ENCODE measurements at regions of chr2 and their contacts with region 1.

Region 1: DNA sequence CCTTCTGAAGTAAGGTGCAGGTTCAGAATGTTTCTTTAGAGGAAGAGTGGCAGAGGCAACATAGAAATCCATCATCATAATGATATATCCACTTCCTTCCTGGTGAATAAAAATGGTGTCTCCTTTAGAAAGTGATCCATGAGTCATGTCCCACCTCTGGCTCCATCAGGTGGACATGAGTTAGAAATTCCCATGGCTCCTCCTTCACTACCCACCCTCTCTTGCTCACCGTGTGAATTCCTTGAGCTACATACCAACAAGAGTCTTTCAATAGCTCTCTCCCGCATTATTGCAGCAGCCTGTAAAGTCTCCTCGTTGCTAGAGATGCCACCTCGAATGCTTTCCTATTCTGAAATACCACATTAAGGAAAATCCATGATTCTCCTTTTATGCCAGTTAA is 317.6 kb downstream of the LNPK start:
- DNase-seq: no peak
- ATAC-seq: no peak
- H3K4me3 ChIP-seq: no peak overlapping the region
- H3K27ac ChIP-seq: no peak overlapping the region
- H3K4me1 ChIP-seq: no peaks in the 10 kb centered on the region
- H3K27me3 ChIP-seq: peaks cover 0 to 7% of the 10 kb centered on the region in 2 donors
- CTCF ChIP-seq: no peak
- POLR2A ChIP-seq: no peak

Region 2: DNA sequence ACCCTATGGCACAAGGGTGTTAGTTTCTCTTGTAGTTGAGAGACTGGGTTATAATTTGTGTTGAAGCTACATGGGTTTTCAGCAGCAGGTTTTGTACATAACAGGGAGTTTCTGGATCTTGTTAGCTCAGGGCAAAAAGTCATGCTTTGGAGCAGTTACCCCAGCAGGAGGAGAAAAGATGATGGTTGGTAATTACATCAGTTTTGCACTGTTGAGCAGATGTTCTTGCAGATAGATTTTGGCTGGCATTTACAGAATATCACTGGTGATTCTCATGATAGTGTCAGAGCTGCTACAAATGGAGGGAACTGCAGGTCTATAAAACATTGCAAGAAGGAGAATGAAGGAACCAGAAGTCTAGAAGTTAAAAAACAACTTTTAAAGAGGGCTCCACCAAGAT is 287.8 kb before region 1 on chr2:
- intact Hi-C with region 1: no loop called
- DNase-seq: no peak
- ATAC-seq: no peak
- H3K4me3 ChIP-seq: no peak overlapping the region
- H3K27ac ChIP-seq: no peak overlapping the region
- H3K4me1 ChIP-seq: no peaks in the 10 kb centered on the region
- H3K27me3 ChIP-seq: no peaks in the 10 kb centered on the region
- CTCF ChIP-seq: no peak
- POLR2A ChIP-seq: no peak

Region 3: DNA sequence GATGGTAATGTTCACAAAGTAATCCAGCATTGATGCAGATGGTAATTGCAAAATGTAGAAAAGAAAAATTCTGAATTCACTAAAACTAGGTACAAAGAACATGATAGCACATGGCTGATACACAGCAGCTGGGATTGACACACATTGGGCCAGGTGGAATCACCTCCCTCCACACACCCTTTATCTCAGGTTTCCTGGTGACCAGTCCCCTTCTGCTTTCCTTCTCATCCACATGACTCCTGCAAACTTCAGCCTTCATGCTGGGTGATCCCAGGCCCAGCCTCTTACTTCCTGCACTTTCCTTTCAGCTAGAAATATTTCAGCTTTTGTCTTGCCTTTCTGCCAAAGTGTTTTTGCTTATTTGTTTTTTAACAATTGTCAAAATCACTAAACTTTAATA is 70.7 kb after region 1 on chr2:
- intact Hi-C with region 1: no loop called
- DNase-seq: no peak
- ATAC-seq: no peak
- H3K4me3 ChIP-seq: no peak overlapping the region
- H3K27ac ChIP-seq: no peak overlapping the region
- H3K4me1 ChIP-seq: no peaks in the 10 kb centered on the region
- H3K27me3 ChIP-seq: no peaks in the 10 kb centered on the region
- CTCF ChIP-seq: no peak
- POLR2A ChIP-seq: no peak

Region 4: GRCh38 chr2:175926272-175926671 is 241.8 kb after region 1 on chr2:
- intact Hi-C with region 1: no loop called
- DNase-seq: no peak
- ATAC-seq: no peak
- H3K4me3 ChIP-seq: no peak overlapping the region
- H3K27ac ChIP-seq: no peak overlapping the region
- H3K4me1 ChIP-seq: no peaks in the 10 kb centered on the region
- H3K27me3 ChIP-seq: no peaks in the 10 kb centered on the region
- CTCF ChIP-seq: no peak
- POLR2A ChIP-seq: no peak

Region 5: DNA sequence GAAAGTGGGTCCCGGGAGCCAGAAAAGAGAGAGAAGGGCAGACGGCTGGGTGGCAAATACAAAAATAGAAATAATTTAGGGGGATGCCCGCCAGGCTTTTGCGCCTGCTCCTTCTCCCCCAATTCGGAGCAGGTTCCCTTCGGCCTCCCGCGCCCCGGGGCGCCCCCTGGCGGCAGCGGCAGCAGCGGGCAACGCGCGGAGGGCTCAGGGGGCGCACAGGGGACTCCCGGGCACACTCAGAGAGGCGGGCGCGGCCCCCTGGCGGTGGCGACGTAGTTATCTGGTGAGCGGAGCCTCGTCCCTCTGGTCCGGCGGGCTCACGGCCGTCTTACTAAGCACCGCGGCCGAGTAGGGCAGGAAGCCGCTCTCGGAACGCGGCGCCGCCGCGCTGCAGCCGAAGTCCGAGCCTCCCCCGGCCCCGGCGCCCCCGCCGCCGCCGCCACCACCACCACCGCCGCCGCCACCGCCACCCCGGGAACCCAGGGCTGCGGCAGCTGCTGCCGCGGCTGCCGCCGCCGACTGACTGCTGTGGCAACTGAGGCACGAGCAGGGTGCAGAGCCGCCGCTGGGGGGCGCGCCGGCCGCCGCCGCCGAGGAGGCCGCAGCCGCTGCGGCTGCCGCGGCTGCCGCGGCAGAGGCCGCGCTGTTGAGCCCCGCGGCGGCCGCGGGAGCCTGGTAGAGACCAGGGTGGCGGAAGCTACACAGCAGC is 395.5 kb after region 1 on chr2:
- intact Hi-C with region 1: loop called (anchors 10 kb)
- DNase-seq: peak in 1 of 3 donors; percentile 34
- ATAC-seq: peak; percentile 36 to 57 (median 50)
- H3K4me3 ChIP-seq: no peak overlapping the region
- H3K27ac ChIP-seq: no peak overlapping the region
- H3K4me1 ChIP-seq: peaks cover 0 to 6% (median 0%) of the 10 kb centered on the region in 4 donors
- H3K27me3 ChIP-seq: peaks cover 33 to 86% of the 10 kb centered on the region in 2 donors
- CTCF ChIP-seq: peak; percentile 43 to 69 (median 64)
- POLR2A ChIP-seq: no peak

Region 6: GRCh38 chr2:176088048-176088936 is 403.8 kb after region 1 on chr2:
- intact Hi-C with region 1: loop called in 1 of 2 experiments (anchors 10 kb)
- DNase-seq: peak; percentile 63 to 68 (median 64)
- ATAC-seq: peak; percentile 86 to 94 (median 88)
- H3K4me3 ChIP-seq: peak overlapping the region in 1 of 3 donors; percentile 22
- H3K27ac ChIP-seq: no peak overlapping the region
- H3K4me1 ChIP-seq: peaks cover 0 to 16% (median 4%) of the 10 kb centered on the region in 4 donors
- H3K27me3 ChIP-seq: peaks cover 37 to 71% of the 10 kb centered on the region in 2 donors
- CTCF ChIP-seq: peak; percentile 40 to 83 (median 72)
- POLR2A ChIP-seq: no peak